MCF 10A (cell line): ENCODE measurements at regions of chr16 and their contacts with region 1.

Region 1: DNA sequence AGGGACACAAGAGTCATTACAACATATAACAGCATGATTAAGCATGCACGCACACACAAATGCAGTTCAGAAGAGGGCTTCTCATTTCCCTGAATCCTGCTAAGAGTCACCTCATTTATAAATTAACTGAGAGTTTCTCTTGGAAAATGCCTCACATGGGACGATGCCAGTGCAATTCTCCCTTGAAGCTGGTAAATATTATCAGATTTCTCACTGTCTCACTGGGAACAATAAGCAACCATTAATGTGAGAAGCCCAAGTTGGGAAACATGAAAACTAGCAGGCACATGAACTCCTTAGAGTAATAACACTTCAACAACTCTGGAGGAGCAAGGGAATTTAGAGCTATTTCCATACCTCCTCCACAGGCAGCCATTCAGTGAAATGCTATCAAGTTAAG is 26.4 kb downstream of the SETD6 start:
- DNase-seq: no peak
- H3K4me3 Mint-ChIP-seq: no peak overlapping the region
- H3K27ac Mint-ChIP-seq: no peak overlapping the region
- H3K4me1 Mint-ChIP-seq: no peaks in the 10 kb centered on the region
- H3K27me3 Mint-ChIP-seq: no peaks in the 10 kb centered on the region
- CTCF ChIP-seq: no peak

Region 2: DNA sequence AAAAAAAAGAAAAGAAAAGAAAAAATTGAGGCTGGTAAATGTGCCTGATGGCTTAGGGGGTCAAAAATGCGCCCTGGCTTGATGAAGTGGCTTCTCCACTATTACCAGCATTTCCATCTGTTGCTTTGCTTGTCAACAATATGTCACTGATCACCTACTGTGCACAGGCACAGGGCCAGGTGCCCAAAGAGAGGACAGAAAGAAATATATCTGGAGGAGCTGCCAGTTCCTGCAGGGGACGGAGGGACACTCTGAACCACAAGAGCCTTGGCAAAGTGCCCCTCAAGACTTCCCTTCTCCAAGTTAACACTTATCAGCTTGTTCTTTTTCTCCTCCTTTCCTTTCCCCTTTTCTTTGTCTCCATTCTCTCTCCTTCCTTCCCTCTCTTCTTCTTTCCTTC is 114.7 kb before region 1 on chr16:
- CTCF ChIA-PET with region 1: no interaction called
- POLR2A ChIA-PET with region 1: no interaction called
- intact Hi-C with region 1: no loop called
- DNase-seq: no peak
- H3K4me3 Mint-ChIP-seq: no peak overlapping the region
- H3K27ac Mint-ChIP-seq: no peak overlapping the region
- H3K4me1 Mint-ChIP-seq: no peaks in the 10 kb centered on the region
- H3K27me3 Mint-ChIP-seq: peaks cover 37% of the 10 kb centered on the region
- CTCF ChIP-seq: no peak

Region 3: DNA sequence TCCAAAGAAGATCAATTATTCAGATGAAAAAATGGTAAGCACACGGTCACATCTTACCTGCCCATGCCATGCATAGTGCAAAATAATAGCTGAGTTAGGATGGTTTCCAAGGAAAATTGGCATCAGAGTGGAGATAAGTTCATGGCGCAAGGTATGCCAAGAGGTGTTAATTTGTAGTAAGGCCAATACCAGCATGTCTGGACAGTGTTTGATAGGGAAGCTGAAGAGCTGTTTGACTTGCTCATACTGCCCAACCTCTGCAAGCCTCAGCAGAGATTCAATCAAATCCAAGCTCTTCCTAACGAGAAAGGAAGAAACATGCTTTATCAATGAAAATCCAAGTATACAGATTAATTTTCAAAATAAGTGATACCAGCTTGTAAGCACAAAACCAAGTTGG is 36.9 kb after region 1 on chr16:
- CTCF ChIA-PET with region 1: no interaction called
- POLR2A ChIA-PET with region 1: interaction called, 4 read pairs
- intact Hi-C with region 1: loop called (anchors 5 kb)
- DNase-seq: no peak
- H3K4me3 Mint-ChIP-seq: no peak overlapping the region
- H3K27ac Mint-ChIP-seq: no peak overlapping the region
- H3K4me1 Mint-ChIP-seq: no peaks in the 10 kb centered on the region
- H3K27me3 Mint-ChIP-seq: no peaks in the 10 kb centered on the region
- CTCF ChIP-seq: no peak

Region 4: DNA sequence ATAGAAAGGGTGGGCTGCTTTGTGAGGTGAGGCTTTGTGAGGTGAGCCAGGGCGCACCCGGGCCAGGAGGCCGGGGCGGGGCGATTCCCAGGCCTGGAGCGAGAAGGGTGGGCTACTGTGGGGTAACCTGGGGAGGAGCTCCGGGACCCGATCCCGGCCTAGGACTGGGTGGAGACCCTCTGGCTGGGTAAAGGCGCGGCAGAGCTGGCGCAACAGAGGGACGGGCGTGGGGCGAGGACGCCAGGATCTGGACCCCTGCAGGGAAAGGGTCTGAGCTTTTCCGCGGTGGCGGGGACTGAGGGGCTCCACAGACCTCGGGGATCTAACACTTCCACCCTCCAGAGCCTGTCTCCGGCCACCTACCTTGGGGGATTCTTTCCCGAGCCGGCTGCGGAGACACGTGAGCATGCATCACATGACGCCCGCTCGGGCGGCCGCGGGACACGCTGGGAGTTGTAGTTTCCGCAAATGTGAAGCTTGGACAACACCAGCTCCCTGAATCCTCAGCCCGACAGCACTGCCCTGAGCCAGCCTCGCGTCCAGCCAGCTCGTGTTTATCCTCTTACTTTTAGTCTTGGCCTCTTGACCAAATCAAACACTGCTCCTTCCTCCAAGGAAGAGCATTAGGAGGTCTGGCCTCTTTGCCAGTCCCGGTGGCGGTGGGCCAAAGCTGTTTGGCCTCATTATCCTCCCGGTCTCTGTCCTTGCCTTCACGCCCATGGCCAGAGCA is 142.8 kb after region 1 on chr16 and contains the start of gene SLC38A7:
- CTCF ChIA-PET with region 1: no interaction called
- POLR2A ChIA-PET with region 1: no interaction called
- intact Hi-C with region 1: no loop called
- DNase-seq: peak; percentile 76
- H3K4me3 Mint-ChIP-seq: peak within 1 kb of the TSS; percentile 86
- H3K27ac Mint-ChIP-seq: peak within 1 kb of the TSS; percentile 73
- H3K4me1 Mint-ChIP-seq: peaks cover 16% of the 10 kb centered on the region
- H3K27me3 Mint-ChIP-seq: no peaks in the 10 kb centered on the region
- CTCF ChIP-seq: no peak
- total RNA-seq, gene SLC38A7: 12.6 and 21.4 TPM in 2 replicates